CD4-positive, alpha-beta T cell (primary cell): ENCODE measurements at regions of chr10 and their contacts with region 1.

Region 1: GRCh38 chr10:24617771-24618391 is 105.8 kb downstream of the ARHGAP21 start:
- DNase-seq: peak; percentile 14 to 79 (median 35)
- ATAC-seq: no peak
- H3K4me3 ChIP-seq: no peak overlapping the region
- H3K4me3 Mint-ChIP-seq: peak overlapping the region; percentile 64
- H3K27ac ChIP-seq: no peak overlapping the region
- H3K27ac Mint-ChIP-seq: peak overlapping the region; percentile 89
- H3K4me1 ChIP-seq: no peaks in the 10 kb centered on the region
- H3K4me1 Mint-ChIP-seq: peaks cover 50% of the 10 kb centered on the region
- H3K27me3 ChIP-seq: no peaks in the 10 kb centered on the region
- H3K27me3 Mint-ChIP-seq: no peaks in the 10 kb centered on the region
- CTCF ChIP-seq: peak; percentile 86

Region 2: DNA sequence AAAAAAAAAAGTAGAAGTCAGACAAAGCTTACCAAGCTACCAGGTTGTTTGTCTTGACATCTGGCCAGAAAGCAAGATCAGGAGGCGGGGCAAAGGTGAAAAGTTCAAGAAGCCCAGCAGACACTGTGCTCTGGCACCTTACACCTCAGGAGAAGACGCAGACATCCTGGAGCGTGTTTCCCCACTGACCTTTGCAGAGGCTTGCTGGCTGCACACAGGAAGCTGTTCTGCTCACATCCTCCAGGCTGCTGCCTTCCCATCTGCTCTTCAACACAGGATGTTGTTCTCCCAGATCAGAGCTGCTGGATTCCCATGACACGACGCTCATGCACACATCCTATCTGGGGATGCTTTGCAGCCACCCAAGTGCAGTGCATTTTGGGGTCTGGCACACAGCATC is 583.3 kb before region 1 on chr10:
- CTCF ChIA-PET with region 1: no interaction called
- POLR2A ChIA-PET with region 1: no interaction called
- intact Hi-C with region 1: no loop called
- DNase-seq: no peak
- ATAC-seq: no peak
- H3K4me3 ChIP-seq: no peak overlapping the region
- H3K4me3 Mint-ChIP-seq: no peak overlapping the region
- H3K27ac ChIP-seq: no peak overlapping the region
- H3K27ac Mint-ChIP-seq: no peak overlapping the region
- H3K4me1 ChIP-seq: no peaks in the 10 kb centered on the region
- H3K4me1 Mint-ChIP-seq: no peaks in the 10 kb centered on the region
- H3K27me3 ChIP-seq: no peaks in the 10 kb centered on the region
- H3K27me3 Mint-ChIP-seq: no peaks in the 10 kb centered on the region
- CTCF ChIP-seq: no peak

Region 3: GRCh38 chr10:24238519-24239252 is 379.2 kb before region 1 on chr10:
- CTCF ChIA-PET with region 1: no interaction called
- POLR2A ChIA-PET with region 1: no interaction called
- intact Hi-C with region 1: no loop called
- DNase-seq: no peak
- ATAC-seq: no peak
- H3K4me3 ChIP-seq: no peak overlapping the region
- H3K4me3 Mint-ChIP-seq: no peak overlapping the region
- H3K27ac ChIP-seq: no peak overlapping the region
- H3K27ac Mint-ChIP-seq: no peak overlapping the region
- H3K4me1 ChIP-seq: no peaks in the 10 kb centered on the region
- H3K4me1 Mint-ChIP-seq: no peaks in the 10 kb centered on the region
- H3K27me3 ChIP-seq: peaks cover 0 to 3% of the 10 kb centered on the region in 2 experiments
- H3K27me3 Mint-ChIP-seq: peaks cover 20% of the 10 kb centered on the region
- CTCF ChIP-seq: no peak

Region 4: DNA sequence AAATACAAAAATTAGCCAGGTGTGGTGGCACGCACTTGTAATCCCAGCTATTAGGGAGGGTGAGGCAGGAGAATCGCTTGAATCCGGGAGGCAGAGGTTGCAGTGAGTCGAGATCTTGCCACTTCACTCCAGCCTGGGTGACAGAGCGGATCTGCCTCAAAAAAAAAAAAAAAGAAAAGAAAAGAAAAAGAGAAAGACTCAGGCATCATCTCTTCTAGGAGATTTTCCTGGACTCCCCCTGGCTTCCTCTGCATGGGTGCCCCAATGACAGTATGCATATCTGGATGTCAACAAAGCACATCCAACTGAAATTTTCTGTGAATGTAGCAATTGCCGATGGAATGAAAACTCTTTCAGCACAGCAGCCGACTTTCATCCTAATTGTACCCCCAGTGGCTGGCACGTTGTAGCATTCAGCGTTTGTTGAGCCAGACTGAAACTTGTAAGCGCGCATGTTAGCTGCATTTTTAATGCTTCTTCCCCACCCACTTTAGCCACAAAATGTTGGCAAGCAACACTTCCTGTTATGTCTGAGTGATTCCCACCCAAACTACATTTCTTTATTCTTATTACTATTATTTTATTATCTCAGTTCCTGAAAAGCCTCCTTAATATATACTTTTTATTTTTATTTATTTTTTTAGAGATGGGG is 264.3 kb after region 1 on chr10:
- CTCF ChIA-PET with region 1: no interaction called
- POLR2A ChIA-PET with region 1: interaction called, 15 read pairs
- intact Hi-C with region 1: loop called in 1 of 2 experiments (anchors 5 kb)
- DNase-seq: peak; percentile 17 to 80 (median 44)
- ATAC-seq: peak; percentile 87
- H3K4me3 ChIP-seq: peak overlapping the region; percentile 42
- H3K4me3 Mint-ChIP-seq: peak overlapping the region; percentile 77
- H3K27ac ChIP-seq: peak overlapping the region in 1 of 2 donors; percentile 63
- H3K27ac Mint-ChIP-seq: peak overlapping the region; percentile 91
- H3K4me1 ChIP-seq: peaks cover 47% of the 10 kb centered on the region
- H3K4me1 Mint-ChIP-seq: peaks cover 52% of the 10 kb centered on the region
- H3K27me3 ChIP-seq: no peaks in the 10 kb centered on the region
- H3K27me3 Mint-ChIP-seq: no peaks in the 10 kb centered on the region
- CTCF ChIP-seq: no peak

Region 5: DNA sequence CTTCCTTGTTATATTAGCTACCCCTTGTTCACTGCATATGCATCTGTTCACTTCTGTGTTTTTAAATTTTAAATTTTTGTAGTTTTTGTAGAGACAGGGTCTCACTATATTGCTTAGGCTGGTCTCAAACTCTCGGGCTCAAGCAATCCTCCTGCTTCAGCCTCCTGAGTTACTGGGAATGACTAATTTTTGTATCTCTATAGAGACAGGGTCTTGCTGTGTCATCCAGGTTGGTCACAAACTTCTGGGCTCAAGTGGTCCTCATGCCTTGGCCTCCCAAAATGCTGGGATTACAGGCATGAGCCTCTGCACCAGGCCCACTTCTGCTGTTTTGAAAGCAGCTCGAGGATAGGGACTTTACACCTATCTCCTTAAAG is 270.0 kb after region 1 on chr10:
- CTCF ChIA-PET with region 1: no interaction called
- POLR2A ChIA-PET with region 1: interaction called, 15 read pairs
- intact Hi-C with region 1: loop called in 1 of 2 experiments (anchors 5 kb)
- DNase-seq: no peak
- ATAC-seq: no peak
- H3K4me3 ChIP-seq: peak overlapping the region; percentile 21
- H3K4me3 Mint-ChIP-seq: peak overlapping the region; percentile 64
- H3K27ac ChIP-seq: peak overlapping the region; percentile 37 to 61
- H3K27ac Mint-ChIP-seq: peak overlapping the region; percentile 76
- H3K4me1 ChIP-seq: peaks cover 45% of the 10 kb centered on the region
- H3K4me1 Mint-ChIP-seq: peaks cover 54% of the 10 kb centered on the region
- H3K27me3 ChIP-seq: no peaks in the 10 kb centered on the region
- H3K27me3 Mint-ChIP-seq: no peaks in the 10 kb centered on the region
- CTCF ChIP-seq: no peak

Region 6: GRCh38 chr10:24952707-24953645 is 335.1 kb after region 1 on chr10:
- CTCF ChIA-PET with region 1: no interaction called
- POLR2A ChIA-PET with region 1: interaction called, 11 read pairs
- intact Hi-C with region 1: loop called in 1 of 2 experiments (anchors 5 kb)
- DNase-seq: peak; percentile 7 to 80 (median 54)
- ATAC-seq: peak; percentile 77
- H3K4me3 ChIP-seq: peak overlapping the region; percentile 72
- H3K4me3 Mint-ChIP-seq: peak overlapping the region; percentile 87
- H3K27ac ChIP-seq: no peak overlapping the region
- H3K27ac Mint-ChIP-seq: peak overlapping the region; percentile 62
- H3K4me1 ChIP-seq: peaks cover 17% of the 10 kb centered on the region
- H3K4me1 Mint-ChIP-seq: peaks cover 18% of the 10 kb centered on the region
- H3K27me3 ChIP-seq: no peaks in the 10 kb centered on the region
- H3K27me3 Mint-ChIP-seq: no peaks in the 10 kb centered on the region
- CTCF ChIP-seq: peak; percentile 24

Region 7: DNA sequence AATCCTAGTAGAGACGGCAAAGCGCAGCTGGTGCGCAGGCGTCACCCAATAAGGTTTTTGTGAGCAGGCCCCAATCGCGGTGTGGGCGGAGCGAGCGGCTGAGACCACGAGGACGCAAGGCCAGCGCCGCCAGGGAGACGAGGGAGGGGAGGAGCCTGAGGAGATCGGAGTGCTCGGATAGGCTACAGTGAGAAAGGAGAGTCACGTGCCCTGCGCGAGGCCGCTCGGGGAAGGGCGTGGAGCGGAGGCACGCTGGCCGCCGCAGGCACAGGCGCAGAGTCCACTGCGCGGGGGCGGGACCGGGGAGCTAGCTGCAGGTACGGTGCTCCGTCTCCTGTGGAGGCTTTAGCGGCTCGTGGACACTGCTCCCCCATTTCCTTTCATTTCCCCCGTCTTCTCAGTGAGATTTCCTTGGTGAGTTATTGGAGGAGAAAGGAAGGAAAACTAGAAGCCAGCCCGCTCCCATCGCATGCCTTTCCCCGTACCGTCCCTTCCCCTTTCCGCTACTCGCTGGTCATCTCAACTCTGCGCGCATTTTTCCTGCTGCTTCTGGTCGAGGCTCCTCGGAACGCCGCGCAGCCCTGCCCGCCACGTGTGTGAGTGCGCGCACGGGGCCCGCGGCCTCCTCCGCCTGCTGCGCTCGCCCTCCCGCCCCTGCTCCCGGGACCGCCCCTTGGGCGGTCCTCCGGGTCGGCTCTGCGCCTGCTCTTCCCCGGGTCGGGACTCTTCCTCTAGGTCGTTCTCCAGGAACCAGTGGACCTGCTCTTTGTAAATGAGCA is 398.7 kb after region 1 on chr10 and contains the start of gene THNSL1:
- CTCF ChIA-PET with region 1: interaction called, 3 read pairs
- POLR2A ChIA-PET with region 1: interaction called, 46 read pairs
- intact Hi-C with region 1: loop called in 1 of 2 experiments (anchors 1 kb)
- DNase-seq: peak; percentile 95 to 99 (median 97)
- ATAC-seq: peak; percentile 93
- H3K4me3 ChIP-seq: peak within 1 kb of the TSS; percentile 82
- H3K4me3 Mint-ChIP-seq: peak within 1 kb of the TSS; percentile 94
- H3K27ac ChIP-seq: peak within 1 kb of the TSS; percentile 86 to 89
- H3K27ac Mint-ChIP-seq: peak within 1 kb of the TSS; percentile 95
- H3K4me1 ChIP-seq: peaks cover 19% of the 10 kb centered on the region
- H3K4me1 Mint-ChIP-seq: peaks cover 29% of the 10 kb centered on the region
- H3K27me3 ChIP-seq: no peaks in the 10 kb centered on the region
- H3K27me3 Mint-ChIP-seq: no peaks in the 10 kb centered on the region
- CTCF ChIP-seq: no peak
- total RNA-seq, gene THNSL1: 0.31 to 0.52 TPM